ENCODE measurements at regions of chr10 and their contacts with region 1.

Region 1: GRCh38 chr10:51743146-51743545 is 43.8 kb upstream of the CSTF2T start:
- DNase-seq: peak; percentile 21
- ATAC-seq: peak; percentile 87
- H3K4me3 ChIP-seq: no peak overlapping the region
- H3K27ac ChIP-seq: no peak overlapping the region
- H3K4me1 ChIP-seq: no peaks in the 10 kb centered on the region
- H3K27me3 ChIP-seq: no peaks in the 10 kb centered on the region
- CTCF ChIP-seq: no peak
- EP300 ChIP-seq: no peak
- POLR2A ChIP-seq: no peak
- RAD21 ChIP-seq: no peak

Region 2: GRCh38 chr10:51729822-51730555 is 13.2 kb before region 1 on chr10:
- CTCF ChIA-PET with region 1: interaction called, 5 read pairs
- POLR2A ChIA-PET with region 1: interaction called, 3 read pairs
- RAD21 ChIA-PET with region 1: no interaction called
- SMC1A ChIA-PET with region 1: interaction called, 14 read pairs
- in situ Hi-C with region 1: no loop called
- intact Hi-C with region 1: no loop called
- DNase-seq: no peak
- ATAC-seq: no peak
- H3K4me3 ChIP-seq: no peak overlapping the region
- H3K27ac ChIP-seq: no peak overlapping the region
- H3K4me1 ChIP-seq: no peaks in the 10 kb centered on the region
- H3K27me3 ChIP-seq: no peaks in the 10 kb centered on the region
- CTCF ChIP-seq: no peak
- EP300 ChIP-seq: no peak
- POLR2A ChIP-seq: no peak
- RAD21 ChIP-seq: no peak

Region 3: DNA sequence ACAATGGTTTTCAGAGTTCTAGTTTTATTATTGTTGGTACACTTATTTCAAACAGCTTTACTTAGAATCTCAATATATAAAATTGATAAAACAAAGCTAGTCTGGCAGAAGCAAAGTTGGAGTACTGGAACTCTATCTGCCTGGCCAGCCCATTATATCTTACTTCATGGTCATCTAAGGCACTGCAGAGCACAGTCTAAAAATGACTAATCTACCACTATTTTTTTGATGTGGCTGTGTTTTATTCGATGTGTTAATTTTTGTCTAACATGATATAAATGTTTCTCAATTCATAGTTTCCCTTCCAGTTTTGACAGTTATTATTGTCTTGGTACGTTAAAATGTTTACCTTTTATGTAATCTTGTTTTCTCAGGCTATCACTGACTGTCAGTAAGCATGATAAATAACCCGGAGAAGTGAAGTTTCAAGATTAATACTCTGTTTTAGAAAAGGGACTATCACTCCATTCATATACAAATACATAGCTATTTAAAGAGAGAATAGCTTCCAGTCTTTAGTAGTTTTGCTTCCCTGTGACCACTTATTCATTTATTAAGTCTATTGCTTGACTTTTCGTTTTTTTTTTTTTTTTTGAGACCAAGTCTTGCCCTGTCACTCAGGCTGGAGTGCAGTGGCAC is 16.9 kb after region 1 on chr10:
- CTCF ChIA-PET with region 1: interaction called, 13 read pairs
- POLR2A ChIA-PET with region 1: no interaction called
- RAD21 ChIA-PET with region 1: interaction called, 5 read pairs
- SMC1A ChIA-PET with region 1: interaction called, 6 read pairs
- in situ Hi-C with region 1: no loop called
- intact Hi-C with region 1: no loop called
- DNase-seq: no peak
- ATAC-seq: peak; percentile 74
- H3K4me3 ChIP-seq: no peak overlapping the region
- H3K27ac ChIP-seq: no peak overlapping the region
- H3K4me1 ChIP-seq: no peaks in the 10 kb centered on the region
- H3K27me3 ChIP-seq: no peaks in the 10 kb centered on the region
- CTCF ChIP-seq: no peak
- EP300 ChIP-seq: no peak
- POLR2A ChIP-seq: no peak
- RAD21 ChIP-seq: no peak

Region 4: GRCh38 chr10:51892965-51893658 is 150.0 kb after region 1 on chr10:
- CTCF ChIA-PET with region 1: no interaction called
- POLR2A ChIA-PET with region 1: no interaction called
- RAD21 ChIA-PET with region 1: no interaction called
- SMC1A ChIA-PET with region 1: no interaction called
- in situ Hi-C with region 1: no loop called
- intact Hi-C with region 1: no loop called
- DNase-seq: no peak
- ATAC-seq: peak; percentile 86
- H3K4me3 ChIP-seq: no peak overlapping the region
- H3K27ac ChIP-seq: no peak overlapping the region
- H3K4me1 ChIP-seq: no peaks in the 10 kb centered on the region
- H3K27me3 ChIP-seq: no peaks in the 10 kb centered on the region
- CTCF ChIP-seq: peak; percentile 30 to 51 (median 38); a peak in 4 of 6 replicates
- EP300 ChIP-seq: no peak
- POLR2A ChIP-seq: no peak
- RAD21 ChIP-seq: peak; percentile 15; the same call in 1 of the 2 replicates